ENCODE measurements at regions of chr12 and their contacts with region 1.

Region 1: DNA sequence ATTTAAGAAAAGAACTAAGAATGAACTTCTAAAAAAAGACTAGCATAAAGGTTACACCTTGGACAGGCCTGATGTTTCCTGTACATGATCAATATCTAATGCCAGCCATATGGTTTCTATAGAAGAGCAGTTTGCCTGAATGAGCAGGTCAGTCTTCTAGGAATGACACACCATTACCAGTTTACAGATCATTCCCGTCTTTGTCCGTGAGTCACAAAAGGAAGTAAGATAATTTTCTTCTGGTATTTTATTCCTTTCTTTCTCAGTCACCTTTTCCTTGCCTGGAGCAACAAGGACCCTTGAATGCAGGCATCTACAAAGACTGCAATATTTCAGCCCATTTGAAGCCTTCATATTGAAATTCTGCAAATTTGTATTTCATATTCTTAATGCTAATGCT is 44.6 kb upstream of the CNTN1 start:
- DNase-seq: no peak
- ATAC-seq: no peak
- H3K4me3 ChIP-seq: no peak overlapping the region
- H3K27ac ChIP-seq: no peak overlapping the region
- H3K4me1 ChIP-seq: no peaks in the 10 kb centered on the region
- H3K27me3 ChIP-seq: no peaks in the 10 kb centered on the region
- CTCF ChIP-seq: no peak

Region 2: GRCh38 chr12:40561395-40561966 is 86.2 kb before region 1 on chr12:
- intact Hi-C with region 1: no loop called
- DNase-seq: no peak
- ATAC-seq: no peak
- H3K4me3 ChIP-seq: no peak overlapping the region
- H3K27ac ChIP-seq: no peak overlapping the region
- H3K4me1 ChIP-seq: no peaks in the 10 kb centered on the region
- H3K27me3 ChIP-seq: no peaks in the 10 kb centered on the region
- CTCF ChIP-seq: no peak

Region 3: DNA sequence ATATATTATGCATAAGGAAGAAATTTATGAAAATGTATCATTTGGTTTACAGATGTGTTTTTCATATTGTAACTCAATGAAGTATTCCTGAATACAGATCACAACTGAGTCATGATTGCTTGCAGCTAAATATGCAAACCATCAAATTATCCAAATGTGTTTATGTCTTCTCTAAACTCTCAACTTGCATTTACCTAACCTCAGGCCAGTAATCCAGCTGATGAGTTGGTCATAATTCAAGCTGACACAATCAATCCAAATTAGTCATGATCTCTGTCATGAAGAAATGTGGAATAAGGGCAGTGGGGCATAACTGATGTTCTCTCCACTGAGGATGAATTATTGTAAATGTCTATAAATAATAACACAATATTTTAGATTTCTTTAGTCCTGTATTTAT is 60.2 kb before region 1 on chr12:
- intact Hi-C with region 1: no loop called
- DNase-seq: no peak
- ATAC-seq: no peak
- H3K4me3 ChIP-seq: no peak overlapping the region
- H3K27ac ChIP-seq: no peak overlapping the region
- H3K4me1 ChIP-seq: no peaks in the 10 kb centered on the region
- H3K27me3 ChIP-seq: no peaks in the 10 kb centered on the region
- CTCF ChIP-seq: no peak

Region 4: GRCh38 chr12:41034686-41035085 is 387.0 kb after region 1 on chr12:
- intact Hi-C with region 1: no loop called
- DNase-seq: no peak
- ATAC-seq: no peak
- H3K4me3 ChIP-seq: no peak overlapping the region
- H3K27ac ChIP-seq: no peak overlapping the region
- H3K4me1 ChIP-seq: no peaks in the 10 kb centered on the region
- H3K27me3 ChIP-seq: peaks cover 0 to 2% (median 0%) of the 10 kb centered on the region in 3 donors
- CTCF ChIP-seq: no peak

Region 5: GRCh38 chr12:42568952-42569915 is 1921.6 kb after region 1 on chr12:
- intact Hi-C with region 1: loop called in 1 of 2 experiments (anchors 5 kb)
- DNase-seq: no peak
- ATAC-seq: peak; percentile 57 to 89 (median 68)
- H3K4me3 ChIP-seq: no peak overlapping the region
- H3K27ac ChIP-seq: no peak overlapping the region
- H3K4me1 ChIP-seq: no peaks in the 10 kb centered on the region
- H3K27me3 ChIP-seq: no peaks in the 10 kb centered on the region
- CTCF ChIP-seq: peak; percentile 60

Measured in psoas muscle (tissue), 8 donors.